ENCODE measurements at regions of chr10 and their contacts with region 1.

Region 1: DNA sequence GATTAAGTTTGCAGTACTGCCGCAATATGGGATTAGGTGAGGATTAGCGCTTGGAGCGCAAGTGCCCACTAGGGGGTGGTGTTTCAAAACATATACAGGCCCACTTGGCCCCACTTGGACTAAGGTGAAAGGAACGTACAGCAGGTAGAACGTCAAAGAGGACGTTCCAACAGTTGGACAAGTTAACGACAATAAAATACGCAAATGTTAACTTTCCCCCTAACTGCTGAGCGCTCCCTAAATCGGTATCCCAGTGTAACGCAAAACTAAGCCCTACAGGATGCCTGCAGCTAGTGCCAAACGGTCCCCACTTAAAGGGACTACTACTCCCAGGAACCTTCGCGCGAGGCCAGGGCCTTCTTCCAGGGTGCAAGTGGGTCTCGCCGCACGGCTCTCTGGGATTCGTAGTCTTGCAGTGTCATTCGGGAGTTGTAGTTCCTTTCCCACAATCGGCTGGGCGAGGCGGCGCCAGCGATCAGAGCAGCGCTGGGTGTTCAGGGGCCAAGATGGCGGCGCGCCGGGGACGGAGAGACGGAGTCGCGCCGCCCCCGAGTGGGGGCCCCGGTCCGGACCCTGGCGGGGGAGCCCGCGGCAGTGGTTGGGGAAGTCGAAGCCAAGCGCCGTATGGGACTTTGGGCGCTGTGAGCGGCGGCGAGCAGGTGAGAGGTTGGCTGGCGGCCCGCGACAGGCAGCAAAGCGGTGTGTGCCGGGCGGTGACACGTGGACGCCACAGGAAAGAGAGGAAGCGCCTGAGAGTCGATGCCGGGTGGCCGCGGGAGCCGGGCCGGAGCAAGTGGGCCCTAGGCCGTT is at the start of gene PPRC1:
- DNase-seq: peak; percentile 99
- H3K4me3 Mint-ChIP-seq: peak within 1 kb of the TSS; percentile 94
- H3K27ac Mint-ChIP-seq: peak within 1 kb of the TSS; percentile 97
- H3K4me1 Mint-ChIP-seq: peaks cover 38% of the 10 kb centered on the region
- H3K27me3 Mint-ChIP-seq: peaks cover 3% of the 10 kb centered on the region

Region 2: GRCh38 chr10:102120991-102121753 is 11.6 kb before region 1 on chr10:
- CTCF ChIA-PET with region 1: interaction called, 10 read pairs
- DNase-seq: peak; percentile 37
- H3K4me3 Mint-ChIP-seq: peak overlapping the region; percentile 80
- H3K27ac Mint-ChIP-seq: peak overlapping the region; percentile 93
- H3K4me1 Mint-ChIP-seq: peaks cover 45% of the 10 kb centered on the region
- H3K27me3 Mint-ChIP-seq: no peaks in the 10 kb centered on the region

Region 3: DNA sequence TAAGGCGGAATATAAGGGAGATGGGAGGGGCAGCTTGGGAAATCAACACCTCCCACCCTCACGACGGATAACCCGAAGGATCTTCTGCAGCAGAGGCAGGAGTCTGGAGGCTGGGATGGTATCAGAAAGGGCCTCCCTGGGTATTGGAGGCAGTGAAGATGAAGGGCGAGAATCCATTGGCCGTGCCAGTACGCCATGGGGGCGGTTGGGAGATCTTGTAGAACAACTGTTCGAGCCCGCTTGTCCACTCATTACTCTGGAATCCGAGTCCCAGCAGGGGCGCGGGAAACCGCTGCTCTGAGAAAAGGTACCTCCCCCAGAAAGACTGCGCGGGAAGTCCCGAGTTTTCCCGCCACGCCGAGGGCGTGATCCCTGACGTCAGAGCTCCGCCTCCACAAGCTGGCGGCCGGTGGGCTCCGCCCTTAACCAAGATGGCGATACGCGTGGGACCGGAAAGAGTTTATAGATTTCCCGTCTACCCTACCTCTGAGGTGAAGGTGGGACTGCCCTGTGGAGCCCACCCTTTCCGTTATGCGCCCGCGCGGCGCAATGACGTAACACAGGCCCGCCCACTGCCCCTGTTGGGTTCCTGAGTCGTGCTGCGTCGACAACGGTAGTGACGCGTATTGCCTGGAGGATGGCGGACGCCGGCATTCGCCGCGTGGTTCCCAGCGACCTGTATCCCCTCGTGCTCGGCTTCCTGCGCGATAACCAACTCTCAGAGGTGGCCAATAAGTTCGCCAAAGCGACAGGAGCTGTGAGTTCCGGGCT is 19.2 kb after region 1 on chr10 and contains the start of gene NOLC1:
- CTCF ChIA-PET with region 1: interaction called, 20 read pairs
- DNase-seq: peak; percentile 100
- H3K4me3 Mint-ChIP-seq: peak within 1 kb of the TSS; percentile 98
- H3K27ac Mint-ChIP-seq: peak within 1 kb of the TSS; percentile 98
- H3K4me1 Mint-ChIP-seq: peaks cover 49% of the 10 kb centered on the region
- H3K27me3 Mint-ChIP-seq: no peaks in the 10 kb centered on the region

Region 4: DNA sequence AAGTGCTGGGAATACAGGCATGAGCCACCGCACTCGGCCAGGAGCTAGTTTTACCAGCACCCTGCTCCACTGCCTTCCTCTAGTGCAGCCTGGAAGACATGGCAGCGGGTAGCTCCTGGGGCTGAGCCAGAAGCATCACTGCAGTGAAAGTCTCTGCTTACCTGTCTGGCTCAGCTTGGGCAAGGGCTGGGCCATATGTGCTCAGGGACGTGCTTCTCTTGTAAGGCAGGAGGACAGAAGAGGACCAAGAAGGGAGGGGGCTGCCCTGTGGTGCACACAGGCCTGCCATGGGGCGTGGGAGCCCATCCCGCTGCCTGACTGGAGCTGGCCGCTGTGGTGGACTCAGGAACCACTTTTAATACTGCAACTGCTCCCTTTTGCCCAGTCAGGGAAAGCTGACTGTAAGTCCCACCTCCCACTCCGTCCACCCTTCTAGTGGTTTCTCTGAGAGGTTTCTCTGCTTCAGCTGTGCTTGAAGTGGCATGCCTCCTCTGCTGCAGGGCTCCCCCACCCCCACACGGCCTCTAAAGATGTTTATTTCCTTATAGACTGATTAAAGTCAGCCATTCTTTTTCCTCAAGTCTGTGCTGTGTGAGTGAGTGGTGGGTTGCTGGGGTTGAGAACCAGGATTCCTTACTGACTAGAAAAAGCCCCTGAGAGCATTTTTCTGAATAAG is 343.8 kb after region 1 on chr10:
- CTCF ChIA-PET with region 1: no interaction called
- DNase-seq: peak; percentile 43
- H3K4me3 Mint-ChIP-seq: no peak overlapping the region
- H3K27ac Mint-ChIP-seq: peak overlapping the region; percentile 14
- H3K4me1 Mint-ChIP-seq: peaks cover 29% of the 10 kb centered on the region
- H3K27me3 Mint-ChIP-seq: no peaks in the 10 kb centered on the region